ENCODE measurements at regions of chr2 and their contacts with region 1.

Region 1: GRCh38 chr2:4673025-4673489 is 969.7 kb downstream of the DCDC2C start:
- DNase-seq: no peak
- H3K4me3 ChIP-seq: no peak overlapping the region
- H3K27ac ChIP-seq: peak overlapping the region; percentile 57
- H3K4me1 ChIP-seq: peaks cover 34% of the 10 kb centered on the region
- CTCF ChIP-seq: no peak

Region 2: DNA sequence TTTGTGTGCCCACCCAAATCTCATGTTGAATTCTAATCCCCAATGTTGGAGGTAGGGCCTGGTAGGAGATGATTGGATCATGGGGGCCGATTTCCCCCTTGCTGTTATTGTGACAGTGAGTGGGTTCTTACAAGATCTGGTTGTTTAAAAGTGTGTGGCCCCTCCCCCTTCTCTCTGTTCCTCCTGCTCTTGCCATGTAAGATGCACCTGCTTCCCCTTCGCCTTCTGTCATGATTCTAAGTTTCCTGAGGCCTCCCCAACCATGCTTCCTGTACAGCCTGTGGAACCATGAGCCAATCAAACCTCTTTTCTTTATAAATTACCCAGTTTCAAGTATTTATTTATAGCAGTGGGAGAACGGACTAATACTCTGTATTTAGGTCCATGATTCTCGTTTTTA is 381.6 kb before region 1 on chr2:
- CTCF ChIA-PET with region 1: no interaction called
- POLR2A ChIA-PET with region 1: no interaction called
- intact Hi-C with region 1: loop called (anchors 10 kb)
- DNase-seq: peak; percentile 86
- H3K4me3 ChIP-seq: peak overlapping the region; percentile 24
- H3K27ac ChIP-seq: peak overlapping the region; percentile 78
- H3K4me1 ChIP-seq: peaks cover 28% of the 10 kb centered on the region
- CTCF ChIP-seq: no peak

Region 3: GRCh38 chr2:4653991-4654390 is 19.1 kb before region 1 on chr2:
- CTCF ChIA-PET with region 1: no interaction called
- POLR2A ChIA-PET with region 1: interaction called, 19 read pairs
- intact Hi-C with region 1: loop called (anchors 1 kb)
- DNase-seq: peak; percentile 77
- H3K4me3 ChIP-seq: peak overlapping the region; percentile 25
- H3K27ac ChIP-seq: peak overlapping the region; percentile 73
- H3K4me1 ChIP-seq: peaks cover 45% of the 10 kb centered on the region
- CTCF ChIP-seq: no peak

Measured in OCI-LY7 (cell line).